ENCODE measurements at regions of chr10 and their contacts with region 1.

Region 1: GRCh38 chr10:68600041-68600778 is 40.1 kb downstream of the TET1 start:
- DNase-seq: peak; percentile 57 to 67
- H3K4me3 ChIP-seq: peak overlapping the region; percentile 53
- H3K27ac ChIP-seq: no peak overlapping the region
- H3K4me1 ChIP-seq: peaks cover 11% of the 10 kb centered on the region
- H3K27me3 ChIP-seq: no peaks in the 10 kb centered on the region
- CTCF ChIP-seq: no peak

Region 2: DNA sequence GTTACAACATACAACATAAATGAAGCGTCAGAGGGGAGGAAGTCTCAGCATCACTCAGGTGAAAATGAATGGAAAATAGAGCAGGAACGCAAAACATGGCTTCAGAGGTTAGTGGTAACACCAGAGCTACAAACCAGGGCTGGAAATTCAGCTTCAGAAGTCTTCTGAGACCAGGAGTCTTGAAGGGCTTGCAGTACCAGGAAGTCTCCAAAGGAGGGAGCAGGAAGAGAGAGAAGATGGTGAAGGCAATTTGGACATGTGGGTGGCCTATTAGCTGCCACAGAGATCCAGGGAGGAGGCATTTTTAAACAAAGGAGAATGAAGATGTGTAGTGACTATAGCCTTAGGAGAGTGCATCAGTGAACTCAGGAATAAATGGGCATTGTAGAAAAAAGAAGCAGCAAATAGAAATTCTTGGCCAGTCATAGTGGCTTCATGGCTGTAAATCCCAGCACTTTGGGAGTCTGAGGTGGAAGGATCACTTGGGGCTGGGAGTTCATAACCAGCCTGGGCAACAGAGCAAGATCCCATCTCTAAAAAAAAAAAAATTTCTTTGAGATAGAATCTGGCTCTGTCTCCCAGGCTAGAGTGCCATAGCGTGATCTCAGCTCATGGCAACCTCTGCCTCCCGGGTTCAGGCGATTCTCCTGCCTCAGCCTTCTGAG is 49.3 kb before region 1 on chr10:
- CTCF ChIA-PET with region 1: no interaction called
- POLR2A ChIA-PET with region 1: no interaction called
- intact Hi-C with region 1: no loop called
- DNase-seq: peak in 1 of 2 experiments; percentile 49
- H3K4me3 ChIP-seq: no peak overlapping the region
- H3K27ac ChIP-seq: no peak overlapping the region
- H3K4me1 ChIP-seq: peaks cover 18% of the 10 kb centered on the region
- H3K27me3 ChIP-seq: no peaks in the 10 kb centered on the region
- CTCF ChIP-seq: peak; percentile 79

Region 3: GRCh38 chr10:68813559-68813958 is 213.3 kb after region 1 on chr10:
- CTCF ChIA-PET with region 1: no interaction called
- POLR2A ChIA-PET with region 1: interaction called, 10 read pairs
- intact Hi-C with region 1: no loop called
- DNase-seq: no peak
- H3K4me3 ChIP-seq: no peak overlapping the region
- H3K27ac ChIP-seq: no peak overlapping the region
- H3K4me1 ChIP-seq: peaks cover 20% of the 10 kb centered on the region
- H3K27me3 ChIP-seq: no peaks in the 10 kb centered on the region
- CTCF ChIP-seq: no peak

Measured in PC-9 (cell line).